ENCODE measurements at regions of chr1 and their contacts with region 1.

Region 1: DNA sequence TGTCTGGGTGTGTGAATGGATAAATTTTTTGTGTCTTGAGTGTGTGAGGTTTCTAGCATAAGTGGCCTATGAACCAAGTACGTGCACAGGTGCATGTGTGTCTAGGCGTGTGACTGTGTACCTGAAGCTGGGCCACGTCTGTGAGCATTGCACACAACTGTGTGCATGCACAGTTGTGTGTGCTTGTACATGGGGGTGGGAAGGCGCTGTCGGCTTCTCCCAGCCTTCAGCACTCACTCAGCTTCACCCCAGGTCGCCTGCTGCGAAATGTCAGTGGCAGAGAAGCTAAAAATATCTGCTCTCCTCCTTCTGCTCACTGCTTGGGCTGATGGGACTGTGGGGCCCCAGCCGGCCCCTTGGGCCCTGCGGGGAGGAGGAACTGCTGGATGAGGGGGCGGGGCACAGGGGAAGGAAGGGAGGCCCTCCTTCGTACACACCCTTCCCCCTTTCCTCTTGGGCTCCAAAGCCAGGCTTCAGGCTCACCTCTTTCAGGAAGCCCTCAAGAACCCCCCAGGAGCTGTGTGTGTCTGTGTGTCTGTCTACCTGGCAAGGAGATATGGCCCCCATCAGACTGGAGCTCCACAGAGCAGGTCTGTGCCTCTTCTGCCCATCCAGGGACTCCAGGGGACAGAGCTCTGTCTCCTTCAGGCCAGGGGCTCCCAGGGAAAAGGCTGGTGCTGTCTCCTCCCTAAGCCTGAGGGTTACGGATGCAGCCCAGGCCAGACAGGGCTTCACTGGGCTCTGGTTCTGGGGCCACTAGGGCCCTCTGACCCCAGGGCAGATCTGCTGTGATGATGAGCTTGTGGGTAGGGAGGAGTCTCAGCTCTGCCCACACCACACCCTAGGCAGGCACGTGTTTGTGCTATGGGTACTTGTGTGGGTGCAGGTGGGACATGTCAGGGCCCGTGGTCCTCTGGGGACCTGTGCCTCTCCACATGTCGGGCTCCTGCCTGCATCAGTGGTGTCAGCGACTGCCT is 35.6 kb upstream of the WASF2 start:
- DNase-seq: peak; percentile 24 to 74 (median 42)
- ATAC-seq: peak in 1 of 2 donors; percentile 21
- H3K4me3 Mint-ChIP-seq: peak overlapping the region; percentile 74 to 99 (median 93)
- H3K27ac Mint-ChIP-seq: peak overlapping the region; percentile 94 to 99 (median 98)
- H3K4me1 Mint-ChIP-seq: peaks cover 54 to 87% (median 80%) of the 10 kb centered on the region in 4 donors
- H3K27me3 Mint-ChIP-seq: no peaks in the 10 kb centered on the region

Region 2: GRCh38 chr1:27430903-27431600 is 94.5 kb before region 1 on chr1:
- POLR2A ChIA-PET with region 1: interaction called, 14 read pairs
- DNase-seq: peak in 6 of 10 donors; percentile 30 to 68 (median 42)
- ATAC-seq: peak; percentile 74 to 85
- H3K4me3 Mint-ChIP-seq: peak overlapping the region; percentile 29 to 91 (median 77)
- H3K27ac Mint-ChIP-seq: peak overlapping the region; percentile 40 to 96 (median 90)
- H3K4me1 Mint-ChIP-seq: peaks cover 42 to 95% (median 88%) of the 10 kb centered on the region in 4 donors
- H3K27me3 Mint-ChIP-seq: no peaks in the 10 kb centered on the region

Region 3: DNA sequence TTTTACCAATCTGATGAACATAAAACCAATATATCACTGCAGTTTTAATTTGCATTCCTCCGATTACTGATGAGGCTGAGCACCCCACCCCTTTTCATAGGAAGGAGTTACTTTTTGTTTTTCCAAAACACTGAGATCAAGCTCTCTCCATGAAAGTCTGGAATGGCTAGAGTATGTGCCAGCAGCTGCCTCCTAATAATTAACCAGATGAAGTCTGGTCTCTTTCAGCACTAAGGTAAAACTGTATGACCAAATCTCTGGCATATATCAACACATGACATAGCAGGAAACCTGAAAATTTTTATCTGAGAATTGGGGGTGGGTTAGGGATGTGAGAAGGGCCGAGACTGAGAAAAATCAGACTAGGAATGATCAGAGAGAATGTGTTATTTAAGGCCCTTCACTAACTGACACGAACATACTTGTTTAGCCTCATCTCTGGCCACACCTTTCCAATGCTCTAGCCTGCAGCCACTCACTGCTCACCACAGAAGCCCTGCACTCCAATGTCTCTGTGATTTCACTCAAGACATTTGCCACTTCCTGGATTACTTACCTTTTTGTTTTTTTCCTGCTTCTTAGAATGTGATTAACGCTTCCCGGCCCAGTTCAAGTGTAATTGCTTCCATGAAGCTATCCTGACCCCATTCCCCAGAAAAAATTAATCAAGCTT is 70.3 kb before region 1 on chr1:
- POLR2A ChIA-PET with region 1: interaction called, 10 read pairs
- DNase-seq: peak in 5 of 10 donors; percentile 6 to 47 (median 26)
- ATAC-seq: peak; percentile 78 to 91
- H3K4me3 Mint-ChIP-seq: peak overlapping the region; percentile 57 to 77 (median 68)
- H3K27ac Mint-ChIP-seq: peak overlapping the region; percentile 22 to 94 (median 82)
- H3K4me1 Mint-ChIP-seq: peaks cover 18 to 65% (median 56%) of the 10 kb centered on the region in 4 donors
- H3K27me3 Mint-ChIP-seq: no peaks in the 10 kb centered on the region

Region 4: GRCh38 chr1:27489910-27490741 is 35.5 kb before region 1 on chr1 and contains the start of gene WASF2:
- POLR2A ChIA-PET with region 1: interaction called, 144 read pairs
- DNase-seq: peak; percentile 93 to 99 (median 97)
- ATAC-seq: peak; percentile 91 to 95
- H3K4me3 Mint-ChIP-seq: peak within 1 kb of the TSS; percentile 92 to 99 (median 96)
- H3K27ac Mint-ChIP-seq: peak within 1 kb of the TSS; percentile 97 to 100 (median 99)
- H3K4me1 Mint-ChIP-seq: peaks cover 17 to 55% (median 38%) of the 10 kb centered on the region in 4 donors
- H3K27me3 Mint-ChIP-seq: no peaks in the 10 kb centered on the region
- polyA plus RNA-seq, gene WASF2: 54.8 to 68.9 (median 68.5) TPM

Region 5: GRCh38 chr1:27603681-27604578 is 78.3 kb after region 1 on chr1 and contains the start of gene AHDC1:
- POLR2A ChIA-PET with region 1: interaction called, 26 read pairs
- DNase-seq: peak; percentile 85 to 95 (median 90)
- ATAC-seq: peak; percentile 85 to 87
- H3K4me3 Mint-ChIP-seq: peak within 1 kb of the TSS; percentile 89 to 96 (median 92)
- H3K27ac Mint-ChIP-seq: peak within 1 kb of the TSS; percentile 73 to 98 (median 91)
- H3K4me1 Mint-ChIP-seq: peaks cover 26 to 55% (median 37%) of the 10 kb centered on the region in 4 donors
- H3K27me3 Mint-ChIP-seq: no peaks in the 10 kb centered on the region
- polyA plus RNA-seq, gene AHDC1: 0.57 to 2.4 (median 1.0) TPM

Region 6: GRCh38 chr1:27821761-27822315 is 296.3 kb after region 1 on chr1:
- POLR2A ChIA-PET with region 1: no interaction called
- DNase-seq: no peak
- ATAC-seq: no peak
- H3K4me3 Mint-ChIP-seq: no peak overlapping the region
- H3K27ac Mint-ChIP-seq: no peak overlapping the region
- H3K4me1 Mint-ChIP-seq: no peaks in the 10 kb centered on the region
- H3K27me3 Mint-ChIP-seq: no peaks in the 10 kb centered on the region

Measured in naive thymus-derived CD8-positive, alpha-beta T cell (primary cell).